HEK293T (cell line): ENCODE measurements at regions of chr10 and their contacts with region 1.

Region 1: GRCh38 chr10:102384053-102384452 is 11.5 kb upstream of the NFKB2 start:
- DNase-seq: peak; percentile 48

Region 2: GRCh38 chr10:102342958-102343357 is 41.1 kb before region 1 on chr10:
- CTCF ChIA-PET with region 1: no interaction called
- POLR2A ChIA-PET with region 1: no interaction called
- DNase-seq: no peak

Region 3: GRCh38 chr10:102394079-102394800 is 10.2 kb after region 1 on chr10:
- CTCF ChIA-PET with region 1: interaction called, 18 read pairs
- POLR2A ChIA-PET with region 1: interaction called, 4 read pairs
- DNase-seq: peak; percentile 89

Region 4: GRCh38 chr10:102399217-102400089 is 15.4 kb after region 1 on chr10:
- CTCF ChIA-PET with region 1: interaction called, 18 read pairs
- POLR2A ChIA-PET with region 1: interaction called, 4 read pairs
- DNase-seq: peak; percentile 93

Region 5: DNA sequence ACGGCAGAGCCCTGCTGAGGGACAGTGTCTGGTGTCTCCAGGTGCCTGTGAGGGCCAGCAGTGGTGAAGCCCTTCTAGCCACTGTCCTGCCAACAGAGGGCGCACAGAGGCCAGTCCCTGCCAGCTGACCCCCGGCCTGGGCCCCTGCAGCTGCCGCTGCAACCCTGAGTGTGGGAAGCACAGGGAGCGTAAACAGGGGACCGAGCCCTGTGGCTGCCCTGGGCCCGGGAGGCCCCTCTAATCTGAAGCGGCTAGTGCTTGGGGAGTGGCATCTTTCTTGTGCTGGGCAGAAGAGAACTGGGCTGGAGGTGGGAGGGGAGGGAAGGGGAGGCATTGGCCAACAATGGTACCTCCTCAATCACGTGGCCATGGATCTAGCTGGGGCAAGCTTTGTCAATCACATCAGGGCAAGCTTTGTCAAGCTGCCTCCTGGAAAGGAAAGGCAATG is 294.8 kb after region 1 on chr10:
- CTCF ChIA-PET with region 1: no interaction called
- POLR2A ChIA-PET with region 1: no interaction called
- DNase-seq: peak; percentile 85